A673 (cell line): ENCODE measurements at regions of chr17 and their contacts with region 1.

Region 1: DNA sequence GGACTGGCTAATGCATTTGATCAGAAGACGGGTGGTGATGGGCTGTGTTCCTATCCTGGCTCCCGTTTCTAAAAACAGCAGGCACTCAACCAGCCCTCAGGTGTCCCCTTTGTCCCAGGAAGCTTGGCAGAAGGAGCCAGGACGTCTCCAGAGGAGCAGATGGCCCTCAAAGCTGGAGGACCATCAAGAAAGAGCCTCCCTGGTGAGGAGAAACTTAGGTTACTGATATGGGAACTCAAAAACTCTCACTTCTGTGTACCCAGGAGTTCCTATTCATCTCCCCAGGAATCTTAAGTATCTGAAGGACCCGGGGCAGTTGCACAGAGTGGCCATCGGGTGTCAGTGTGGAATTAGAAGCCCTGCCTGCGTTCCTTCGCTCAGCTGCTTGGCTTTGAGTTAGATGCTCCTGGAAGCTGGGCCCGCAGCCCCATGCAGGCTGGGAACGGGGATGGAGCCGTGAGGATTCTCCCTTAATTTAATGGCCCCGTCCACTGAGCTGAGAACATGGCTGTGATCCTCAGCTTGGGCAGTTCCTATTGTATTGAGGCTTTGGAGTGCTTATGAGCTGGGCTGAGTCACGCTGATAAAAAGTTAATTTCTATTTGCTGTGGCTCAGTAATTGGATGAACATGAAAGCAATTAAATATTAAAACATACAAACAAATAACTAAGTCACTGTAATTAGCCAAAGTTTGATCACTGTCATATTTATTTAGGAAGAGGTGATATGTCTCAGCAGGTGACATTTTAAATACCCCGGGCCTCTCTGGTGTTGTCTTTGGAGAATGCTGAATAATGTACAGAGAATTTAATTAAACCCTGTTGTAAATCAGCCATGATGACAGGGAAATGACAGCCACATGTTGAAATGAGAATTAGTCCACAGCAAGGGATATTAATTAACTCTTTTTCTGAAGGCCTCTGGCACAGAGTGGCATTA is 402.1 kb downstream of the SEC14L1 start:
- DNase-seq: peak; percentile 92
- H3K4me3 ChIP-seq: no peak overlapping the region
- H3K27ac ChIP-seq: no peak overlapping the region
- H3K4me1 ChIP-seq: peaks cover 25% of the 10 kb centered on the region
- H3K27me3 ChIP-seq: no peaks in the 10 kb centered on the region
- CTCF ChIP-seq: peak; percentile 95

Region 2: GRCh38 chr17:77354420-77355241 is 188.2 kb before region 1 on chr17:
- CTCF ChIA-PET with region 1: no interaction called
- POLR2A ChIA-PET with region 1: no interaction called
- intact Hi-C with region 1: no loop called
- DNase-seq: peak; percentile 40
- H3K4me3 ChIP-seq: no peak overlapping the region
- H3K27ac ChIP-seq: no peak overlapping the region
- H3K4me1 ChIP-seq: peaks cover 32% of the 10 kb centered on the region
- H3K27me3 ChIP-seq: no peaks in the 10 kb centered on the region
- CTCF ChIP-seq: no peak

Region 3: GRCh38 chr17:77391668-77392375 is 151.0 kb before region 1 on chr17:
- CTCF ChIA-PET with region 1: interaction called, 13 read pairs
- POLR2A ChIA-PET with region 1: no interaction called
- intact Hi-C with region 1: no loop called
- DNase-seq: peak; percentile 41
- H3K4me3 ChIP-seq: no peak overlapping the region
- H3K27ac ChIP-seq: peak overlapping the region; percentile 69
- H3K4me1 ChIP-seq: peaks cover 53% of the 10 kb centered on the region
- H3K27me3 ChIP-seq: no peaks in the 10 kb centered on the region
- CTCF ChIP-seq: no peak

Region 4: GRCh38 chr17:78013683-78014467 is 471.1 kb after region 1 on chr17:
- CTCF ChIA-PET with region 1: interaction called, 12 read pairs
- POLR2A ChIA-PET with region 1: no interaction called
- intact Hi-C with region 1: loop called (anchors 1 kb)
- DNase-seq: peak; percentile 82
- H3K4me3 ChIP-seq: no peak overlapping the region
- H3K27ac ChIP-seq: no peak overlapping the region
- H3K4me1 ChIP-seq: no peaks in the 10 kb centered on the region
- H3K27me3 ChIP-seq: no peaks in the 10 kb centered on the region
- CTCF ChIP-seq: peak; percentile 87